CD4-positive, alpha-beta T cell (primary cell): ENCODE measurements at regions of chr22 and their contacts with region 1.

Region 1: GRCh38 chr22:46613606-46614021 is 6.6 kb upstream of the GRAMD4 start:
- DNase-seq: peak in 4 of 14 experiments; percentile 7 to 30 (median 14)
- ATAC-seq: no peak
- H3K4me3 ChIP-seq: peak overlapping the region; percentile 62
- H3K4me3 Mint-ChIP-seq: peak overlapping the region; percentile 93
- H3K27ac ChIP-seq: peak overlapping the region in 1 of 2 donors; percentile 14
- H3K27ac Mint-ChIP-seq: peak overlapping the region; percentile 96
- H3K4me1 ChIP-seq: peaks cover 33% of the 10 kb centered on the region
- H3K4me1 Mint-ChIP-seq: peaks cover 28% of the 10 kb centered on the region
- H3K27me3 ChIP-seq: no peaks in the 10 kb centered on the region
- H3K27me3 Mint-ChIP-seq: no peaks in the 10 kb centered on the region
- CTCF ChIP-seq: no peak

Region 2: GRCh38 chr22:46514592-46515207 is 98.9 kb before region 1 on chr22:
- CTCF ChIA-PET with region 1: no interaction called
- POLR2A ChIA-PET with region 1: no interaction called
- intact Hi-C with region 1: no loop called
- DNase-seq: peak in 1 of 14 experiments; percentile 5
- ATAC-seq: no peak
- H3K4me3 ChIP-seq: no peak overlapping the region
- H3K4me3 Mint-ChIP-seq: no peak overlapping the region
- H3K27ac ChIP-seq: no peak overlapping the region
- H3K27ac Mint-ChIP-seq: no peak overlapping the region
- H3K4me1 ChIP-seq: no peaks in the 10 kb centered on the region
- H3K4me1 Mint-ChIP-seq: no peaks in the 10 kb centered on the region
- H3K27me3 ChIP-seq: no peaks in the 10 kb centered on the region
- H3K27me3 Mint-ChIP-seq: no peaks in the 10 kb centered on the region
- CTCF ChIP-seq: no peak

Region 3: GRCh38 chr22:46576556-46577367 is 36.9 kb before region 1 on chr22:
- CTCF ChIA-PET with region 1: no interaction called
- POLR2A ChIA-PET with region 1: no interaction called
- intact Hi-C with region 1: loop called (anchors 5 kb)
- DNase-seq: peak; percentile 29 to 91 (median 56)
- ATAC-seq: peak; percentile 75
- H3K4me3 ChIP-seq: peak overlapping the region; percentile 65
- H3K4me3 Mint-ChIP-seq: peak overlapping the region; percentile 93
- H3K27ac ChIP-seq: no peak overlapping the region
- H3K27ac Mint-ChIP-seq: peak overlapping the region; percentile 85
- H3K4me1 ChIP-seq: peaks cover 43% of the 10 kb centered on the region
- H3K4me1 Mint-ChIP-seq: peaks cover 41% of the 10 kb centered on the region
- H3K27me3 ChIP-seq: no peaks in the 10 kb centered on the region
- H3K27me3 Mint-ChIP-seq: no peaks in the 10 kb centered on the region
- CTCF ChIP-seq: no peak